CD4-positive, alpha-beta T cell (primary cell): ENCODE measurements at regions of chr1 and their contacts with region 1.

Region 1: GRCh38 chr1:227924833-227925574 is 22.7 kb downstream of the WNT9A start:
- DNase-seq: no peak
- ATAC-seq: no peak
- H3K4me3 ChIP-seq: no peak overlapping the region
- H3K4me3 Mint-ChIP-seq: no peak overlapping the region
- H3K27ac ChIP-seq: no peak overlapping the region
- H3K27ac Mint-ChIP-seq: no peak overlapping the region
- H3K4me1 ChIP-seq: no peaks in the 10 kb centered on the region
- H3K4me1 Mint-ChIP-seq: no peaks in the 10 kb centered on the region
- H3K27me3 ChIP-seq: no peaks in the 10 kb centered on the region
- H3K27me3 Mint-ChIP-seq: no peaks in the 10 kb centered on the region
- CTCF ChIP-seq: no peak

Region 2: GRCh38 chr1:227869851-227870305 is 55.1 kb before region 1 on chr1:
- CTCF ChIA-PET with region 1: no interaction called
- POLR2A ChIA-PET with region 1: no interaction called
- intact Hi-C with region 1: loop called in 1 of 2 experiments (anchors 2 kb)
- DNase-seq: peak in 4 of 14 experiments; percentile 25 to 68 (median 46)
- ATAC-seq: peak; percentile 67
- H3K4me3 ChIP-seq: no peak overlapping the region
- H3K4me3 Mint-ChIP-seq: peak overlapping the region; percentile 79
- H3K27ac ChIP-seq: no peak overlapping the region
- H3K27ac Mint-ChIP-seq: peak overlapping the region; percentile 47
- H3K4me1 ChIP-seq: peaks cover 35% of the 10 kb centered on the region
- H3K4me1 Mint-ChIP-seq: peaks cover 56% of the 10 kb centered on the region
- H3K27me3 ChIP-seq: no peaks in the 10 kb centered on the region
- H3K27me3 Mint-ChIP-seq: peaks cover 5% of the 10 kb centered on the region
- CTCF ChIP-seq: no peak

Region 3: DNA sequence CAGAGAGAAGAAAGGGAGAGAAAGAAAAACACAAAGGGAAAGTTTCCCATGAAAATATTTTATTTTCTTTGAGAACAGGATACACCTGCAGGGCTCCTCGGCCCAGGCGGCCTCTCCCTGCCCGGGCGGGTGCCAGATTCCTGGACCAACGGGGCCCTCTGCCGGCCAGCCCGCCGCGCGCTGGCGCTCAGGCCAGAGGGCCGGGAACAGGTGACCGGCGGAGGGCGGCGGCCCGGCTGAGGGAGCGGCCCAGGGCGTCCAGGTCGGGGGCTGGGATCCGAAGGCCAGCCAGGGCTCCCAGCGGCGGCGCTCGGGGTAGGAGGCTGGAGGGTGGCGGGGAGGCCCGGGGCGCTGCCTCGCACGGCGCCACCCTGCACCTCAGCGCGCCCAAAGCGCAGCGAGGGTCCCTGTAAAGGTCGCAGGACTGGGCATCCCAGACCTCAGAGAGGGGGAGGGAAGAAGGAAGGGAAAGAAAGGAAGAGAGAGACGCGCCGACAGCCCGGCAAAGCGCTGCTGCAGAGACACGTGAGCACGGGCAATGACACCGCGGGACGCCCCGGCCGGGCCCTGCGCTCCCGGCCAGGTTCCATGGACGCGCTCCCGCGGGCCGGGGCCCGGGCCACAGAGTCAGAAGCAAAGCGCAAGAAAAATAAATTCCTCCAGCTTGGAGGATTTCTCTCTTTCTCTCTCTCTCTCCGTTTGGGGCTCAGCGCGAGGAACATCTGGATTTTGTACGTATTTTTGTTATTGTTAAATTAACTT is 21.8 kb after region 1 on chr1:
- CTCF ChIA-PET with region 1: no interaction called
- POLR2A ChIA-PET with region 1: no interaction called
- intact Hi-C with region 1: no loop called
- DNase-seq: peak in 13 of 14 experiments; percentile 35 to 75 (median 52)
- ATAC-seq: peak; percentile 71
- H3K4me3 ChIP-seq: peak overlapping the region; percentile 33
- H3K4me3 Mint-ChIP-seq: peak overlapping the region; percentile 72
- H3K27ac ChIP-seq: no peak overlapping the region
- H3K27ac Mint-ChIP-seq: no peak overlapping the region
- H3K4me1 ChIP-seq: peaks cover 22% of the 10 kb centered on the region
- H3K4me1 Mint-ChIP-seq: no peaks in the 10 kb centered on the region
- H3K27me3 ChIP-seq: peaks cover 13 to 19% of the 10 kb centered on the region in 2 experiments
- H3K27me3 Mint-ChIP-seq: peaks cover 19% of the 10 kb centered on the region
- CTCF ChIP-seq: peak; percentile 87

Region 4: GRCh38 chr1:227999056-227999930 is 74.3 kb after region 1 on chr1:
- CTCF ChIA-PET with region 1: no interaction called
- POLR2A ChIA-PET with region 1: no interaction called
- intact Hi-C with region 1: no loop called
- DNase-seq: peak; percentile 46 to 83 (median 63)
- ATAC-seq: peak; percentile 98
- H3K4me3 ChIP-seq: no peak overlapping the region
- H3K4me3 Mint-ChIP-seq: no peak overlapping the region
- H3K27ac ChIP-seq: no peak overlapping the region
- H3K27ac Mint-ChIP-seq: no peak overlapping the region
- H3K4me1 ChIP-seq: peaks cover 2% of the 10 kb centered on the region
- H3K4me1 Mint-ChIP-seq: no peaks in the 10 kb centered on the region
- H3K27me3 ChIP-seq: peaks cover 9 to 11% of the 10 kb centered on the region in 2 experiments
- H3K27me3 Mint-ChIP-seq: peaks cover 43% of the 10 kb centered on the region
- CTCF ChIP-seq: peak; percentile 62

Region 5: DNA sequence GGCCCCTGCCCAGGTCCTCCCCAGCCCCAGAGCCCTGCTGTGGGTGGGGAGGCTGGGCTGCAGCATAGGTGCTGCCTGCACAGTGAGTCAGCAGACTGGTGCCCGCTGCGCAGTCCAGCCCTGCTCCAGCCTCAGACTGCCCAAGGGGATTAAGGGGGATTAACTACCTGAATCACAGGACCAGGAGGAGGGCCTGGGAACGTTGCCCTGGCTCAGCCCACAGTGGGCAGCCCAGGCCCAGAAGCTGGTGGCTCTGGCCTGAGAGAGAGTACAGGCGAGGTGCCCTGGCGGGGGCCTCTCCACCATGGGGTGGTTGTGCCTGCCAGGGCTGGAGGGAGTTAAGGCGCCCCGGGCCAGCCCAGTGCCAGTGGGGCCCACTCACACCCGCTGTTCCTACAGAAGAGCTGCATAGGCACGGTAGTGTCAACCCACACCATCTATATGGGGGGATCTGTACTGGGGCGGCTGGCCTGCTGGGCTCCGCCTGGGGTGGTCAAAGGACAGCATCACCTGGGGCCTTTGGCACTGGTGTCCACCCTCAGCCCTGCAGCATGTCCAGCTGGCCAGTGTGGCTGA is 285.2 kb after region 1 on chr1:
- CTCF ChIA-PET with region 1: no interaction called
- POLR2A ChIA-PET with region 1: no interaction called
- intact Hi-C with region 1: no loop called
- DNase-seq: no peak
- ATAC-seq: no peak
- H3K4me3 ChIP-seq: no peak overlapping the region
- H3K4me3 Mint-ChIP-seq: peak overlapping the region; percentile 42
- H3K27ac ChIP-seq: no peak overlapping the region
- H3K27ac Mint-ChIP-seq: no peak overlapping the region
- H3K4me1 ChIP-seq: peaks cover 22% of the 10 kb centered on the region
- H3K4me1 Mint-ChIP-seq: peaks cover 7% of the 10 kb centered on the region
- H3K27me3 ChIP-seq: peaks cover 0 to 5% of the 10 kb centered on the region in 2 experiments
- H3K27me3 Mint-ChIP-seq: peaks cover 4% of the 10 kb centered on the region
- CTCF ChIP-seq: no peak

Region 6: DNA sequence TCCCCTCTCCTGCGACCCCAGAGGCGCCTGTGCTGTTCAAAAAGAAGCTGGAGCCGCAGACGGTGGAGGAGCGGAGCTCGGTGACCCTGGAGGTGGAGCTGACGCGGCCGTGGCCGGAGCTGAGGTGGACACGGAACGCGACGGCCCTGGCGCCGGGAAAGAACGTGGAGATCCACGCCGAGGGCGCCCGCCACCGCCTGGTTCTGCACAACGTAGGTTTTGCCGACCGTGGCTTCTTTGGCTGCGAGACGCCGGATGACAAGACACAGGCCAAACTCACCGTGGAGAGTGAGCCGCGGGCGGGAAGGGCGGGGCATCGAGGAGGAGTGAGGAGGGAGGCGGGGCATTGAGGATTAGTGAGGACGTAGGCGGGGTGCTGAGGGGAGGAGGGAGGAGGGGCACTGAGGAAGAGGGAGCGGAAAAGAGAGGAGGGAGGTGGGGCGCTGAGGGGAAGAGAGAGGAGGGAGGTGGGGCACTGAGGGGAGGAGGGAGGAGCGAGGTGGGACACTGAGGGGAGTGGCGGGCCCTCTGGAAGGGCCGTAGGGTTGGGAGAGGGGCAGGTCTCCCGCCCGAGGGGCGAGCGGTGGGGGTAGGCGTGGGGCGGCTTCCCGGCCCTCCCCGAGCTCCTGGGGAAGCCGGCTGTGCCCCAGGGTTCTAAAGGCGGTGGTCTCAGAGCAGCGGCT is 350.9 kb after region 1 on chr1:
- CTCF ChIA-PET with region 1: no interaction called
- POLR2A ChIA-PET with region 1: no interaction called
- intact Hi-C with region 1: no loop called
- DNase-seq: peak; percentile 76 to 97 (median 90)
- ATAC-seq: peak; percentile 95
- H3K4me3 ChIP-seq: peak overlapping the region; percentile 75
- H3K4me3 Mint-ChIP-seq: peak overlapping the region; percentile 82
- H3K27ac ChIP-seq: peak overlapping the region; percentile 28 to 56
- H3K27ac Mint-ChIP-seq: peak overlapping the region; percentile 81
- H3K4me1 ChIP-seq: peaks cover 27% of the 10 kb centered on the region
- H3K4me1 Mint-ChIP-seq: peaks cover 14% of the 10 kb centered on the region
- H3K27me3 ChIP-seq: no peaks in the 10 kb centered on the region
- H3K27me3 Mint-ChIP-seq: no peaks in the 10 kb centered on the region
- CTCF ChIP-seq: no peak